Activated CD8-positive, alpha-beta T cell treated with anti-CD3 and anti-CD28 coated beads, Interleukin-2, amount 10 ng/mL, durations not matched to agents 7 days and 5 days (primary cell): ENCODE measurements at regions of chr9 and their contacts with region 1.

Region 1: DNA sequence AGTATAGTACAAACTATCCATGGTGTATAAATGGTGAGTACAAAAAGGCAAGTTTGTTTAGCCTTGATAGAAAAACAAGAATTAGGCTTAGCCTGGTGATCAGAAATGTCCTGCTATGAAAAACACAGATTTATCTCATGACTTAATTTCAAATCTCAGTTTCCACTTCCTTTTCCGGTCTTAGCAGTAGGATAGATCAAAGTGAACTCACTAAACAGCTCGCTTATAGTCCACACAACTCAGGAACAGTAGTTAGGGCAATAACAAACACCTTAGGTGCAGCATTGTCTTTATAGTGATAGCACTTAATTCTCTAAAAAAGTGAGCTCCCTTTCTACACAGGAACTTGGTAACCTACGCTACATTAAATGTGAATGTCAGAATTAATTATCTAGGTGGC is 11.4 kb downstream of the GOLGA1 start:
- DNase-seq: no peak
- ATAC-seq: no peak
- H3K4me3 Mint-ChIP-seq: no peak overlapping the region
- H3K27ac Mint-ChIP-seq: no peak overlapping the region
- H3K4me1 Mint-ChIP-seq: peaks cover 5% of the 10 kb centered on the region
- H3K27me3 Mint-ChIP-seq: no peaks in the 10 kb centered on the region

Region 2: DNA sequence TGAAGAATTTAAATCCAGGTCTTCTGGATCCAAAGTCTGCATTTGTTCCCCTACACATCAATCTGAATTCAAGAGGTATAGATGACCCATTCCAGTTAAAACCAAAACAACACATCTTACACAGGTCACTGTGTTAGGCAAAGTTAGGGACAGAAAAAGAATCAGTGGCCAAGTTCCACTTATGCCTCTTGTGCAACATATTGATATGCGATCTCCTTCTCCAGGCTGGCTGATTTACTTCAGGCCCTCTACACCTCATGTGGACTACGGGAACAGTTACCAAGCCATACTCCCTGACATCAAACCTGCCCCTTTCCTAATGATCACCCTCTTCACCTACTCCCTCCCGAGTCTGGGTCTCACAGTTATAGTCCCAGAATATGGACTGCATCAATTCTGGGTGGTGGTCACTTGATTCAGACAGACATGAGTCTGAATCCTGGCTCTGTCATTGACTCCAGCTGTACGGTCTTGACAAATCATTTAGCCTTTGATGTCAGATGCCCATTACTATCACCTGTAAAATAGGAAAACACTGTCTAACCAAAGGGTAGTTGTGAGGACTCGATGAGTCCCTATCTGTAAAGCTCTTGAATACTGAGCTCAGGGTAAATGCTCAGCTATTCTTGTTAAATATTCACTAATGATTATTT is 14.6 kb before region 1 on chr9:
- CTCF ChIA-PET with region 1: interaction called, 10 read pairs
- POLR2A ChIA-PET with region 1: no interaction called
- DNase-seq: no peak
- ATAC-seq: no peak
- H3K4me3 Mint-ChIP-seq: no peak overlapping the region
- H3K27ac Mint-ChIP-seq: peak overlapping the region; percentile 7
- H3K4me1 Mint-ChIP-seq: no peaks in the 10 kb centered on the region
- H3K27me3 Mint-ChIP-seq: no peaks in the 10 kb centered on the region